HCT116 (cell line): ENCODE measurements at regions of chr10 and their contacts with region 1.

Region 1: DNA sequence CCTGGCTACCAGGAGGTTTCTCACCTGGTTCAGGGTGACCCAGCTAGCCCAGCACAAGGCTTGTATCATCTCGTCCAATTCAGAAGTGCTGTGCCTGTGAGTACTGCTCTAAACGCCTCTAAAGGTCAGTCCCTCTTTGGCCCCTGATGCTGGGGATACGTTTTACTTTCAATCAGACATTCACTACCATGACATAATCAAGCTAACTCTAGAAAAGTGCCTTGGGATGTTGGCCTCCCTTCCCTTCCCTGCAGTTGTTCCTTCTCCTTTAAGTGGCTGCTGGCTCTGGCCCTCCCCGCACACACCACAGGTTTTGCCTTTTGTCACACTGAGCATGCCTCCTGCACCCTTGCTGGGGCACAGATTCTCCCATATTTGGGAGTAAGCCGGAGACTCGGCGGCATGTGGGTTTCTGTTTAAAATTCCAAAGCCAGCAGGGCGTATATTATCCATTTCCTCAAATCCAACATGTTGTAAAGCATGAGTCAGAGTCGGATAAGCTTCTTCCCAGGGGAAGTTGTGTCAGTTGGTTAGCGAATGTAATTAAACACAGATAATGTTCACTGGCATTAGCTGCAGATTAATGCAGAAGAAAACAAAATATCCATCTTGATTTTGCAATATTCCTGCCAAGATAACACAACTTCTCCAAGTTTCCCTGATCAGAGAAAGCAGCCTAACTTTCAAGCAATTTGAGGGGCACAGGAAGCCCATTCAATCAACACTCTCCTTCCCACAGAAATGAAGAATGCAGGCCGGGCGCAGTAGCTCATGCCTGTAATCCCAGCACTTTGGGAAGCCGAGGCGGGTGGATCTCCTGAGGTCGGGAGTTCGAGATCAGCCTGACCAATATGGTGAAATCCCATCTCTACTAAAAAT is 31.8 kb upstream of the VCL start:
- DNase-seq: peak; percentile 99
- ATAC-seq: peak; percentile 91
- H3K4me3 ChIP-seq: peak overlapping the region; percentile 13 to 31
- H3K27ac ChIP-seq: peak overlapping the region; percentile 100
- H3K4me1 ChIP-seq: peaks cover 44 to 69% of the 10 kb centered on the region in 2 experiments
- H3K27me3 ChIP-seq: no peaks in the 10 kb centered on the region
- CTCF ChIP-seq: no peak
- POLR2A ChIP-seq: no peak
- RAD21 ChIP-seq: 0 out of 2 replicates have a peak, but pooled peaks have one; percentile 36

Region 2: DNA sequence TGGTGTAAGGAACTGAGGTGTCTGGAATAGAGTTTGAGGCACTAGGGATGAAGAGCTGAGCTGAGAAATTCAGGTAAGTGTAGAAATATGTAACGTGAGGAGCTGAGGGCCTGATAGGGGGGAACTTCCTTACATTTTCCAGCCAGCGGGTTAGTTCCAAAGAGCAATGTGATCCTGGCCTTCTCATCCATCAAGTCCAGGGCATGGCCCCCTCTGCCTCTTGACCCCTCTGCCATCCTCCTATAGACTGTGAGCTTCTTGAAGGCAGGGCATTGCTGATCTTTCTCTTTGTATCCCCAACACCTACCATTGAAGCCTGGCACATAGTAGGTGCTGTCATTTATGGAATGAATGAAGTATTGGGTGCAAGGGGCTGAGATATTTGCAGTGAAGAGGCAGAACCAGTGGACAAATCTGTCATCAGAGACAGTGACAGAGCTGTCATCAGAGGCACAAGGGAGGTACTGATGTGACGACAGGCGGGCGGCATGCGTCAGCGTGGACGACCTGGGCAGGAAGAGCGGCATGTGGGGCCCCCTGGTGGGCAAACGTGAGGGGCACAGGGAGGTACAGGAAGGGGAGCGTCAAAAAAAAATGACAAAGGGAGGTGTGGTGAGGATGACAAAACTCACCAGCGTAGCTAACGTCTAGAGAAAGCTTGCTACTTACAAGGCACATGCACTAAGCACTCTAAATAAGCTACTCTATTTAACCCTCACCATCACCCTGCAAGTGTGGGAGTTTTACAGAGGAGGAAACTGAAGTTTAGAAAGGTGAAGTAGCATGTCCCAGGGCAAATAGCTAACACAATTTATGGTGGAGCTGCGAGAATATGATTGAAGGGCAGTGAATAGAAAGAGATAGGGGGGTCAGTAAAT is 86.6 kb before region 1 on chr10:
- CTCF ChIA-PET with region 1: no interaction called
- POLR2A ChIA-PET with region 1: no interaction called
- RAD21 ChIA-PET with region 1: no interaction called
- intact Hi-C with region 1: no loop called
- DNase-seq: peak; percentile 81
- ATAC-seq: peak; percentile 90
- H3K4me3 ChIP-seq: no peak overlapping the region
- H3K27ac ChIP-seq: no peak overlapping the region
- H3K4me1 ChIP-seq: peaks cover 29 to 53% of the 10 kb centered on the region in 2 experiments
- H3K27me3 ChIP-seq: no peaks in the 10 kb centered on the region
- CTCF ChIP-seq: peak in 2 of 3 experiments; percentile 93 to 97; a peak in 4 of 6 replicates
- POLR2A ChIP-seq: no peak
- RAD21 ChIP-seq: no peak

Region 3: GRCh38 chr10:73991884-73992245 is 25.7 kb after region 1 on chr10:
- CTCF ChIA-PET with region 1: no interaction called
- POLR2A ChIA-PET with region 1: interaction called, 11 read pairs
- RAD21 ChIA-PET with region 1: no interaction called
- intact Hi-C with region 1: no loop called
- DNase-seq: no peak
- ATAC-seq: peak; percentile 76
- H3K4me3 ChIP-seq: no peak overlapping the region
- H3K27ac ChIP-seq: no peak overlapping the region
- H3K4me1 ChIP-seq: peaks cover 0 to 30% of the 10 kb centered on the region in 2 experiments; a peak in 3 of 4 replicates
- H3K27me3 ChIP-seq: no peaks in the 10 kb centered on the region
- CTCF ChIP-seq: no peak
- POLR2A ChIP-seq: no peak
- RAD21 ChIP-seq: no peak

Region 4: DNA sequence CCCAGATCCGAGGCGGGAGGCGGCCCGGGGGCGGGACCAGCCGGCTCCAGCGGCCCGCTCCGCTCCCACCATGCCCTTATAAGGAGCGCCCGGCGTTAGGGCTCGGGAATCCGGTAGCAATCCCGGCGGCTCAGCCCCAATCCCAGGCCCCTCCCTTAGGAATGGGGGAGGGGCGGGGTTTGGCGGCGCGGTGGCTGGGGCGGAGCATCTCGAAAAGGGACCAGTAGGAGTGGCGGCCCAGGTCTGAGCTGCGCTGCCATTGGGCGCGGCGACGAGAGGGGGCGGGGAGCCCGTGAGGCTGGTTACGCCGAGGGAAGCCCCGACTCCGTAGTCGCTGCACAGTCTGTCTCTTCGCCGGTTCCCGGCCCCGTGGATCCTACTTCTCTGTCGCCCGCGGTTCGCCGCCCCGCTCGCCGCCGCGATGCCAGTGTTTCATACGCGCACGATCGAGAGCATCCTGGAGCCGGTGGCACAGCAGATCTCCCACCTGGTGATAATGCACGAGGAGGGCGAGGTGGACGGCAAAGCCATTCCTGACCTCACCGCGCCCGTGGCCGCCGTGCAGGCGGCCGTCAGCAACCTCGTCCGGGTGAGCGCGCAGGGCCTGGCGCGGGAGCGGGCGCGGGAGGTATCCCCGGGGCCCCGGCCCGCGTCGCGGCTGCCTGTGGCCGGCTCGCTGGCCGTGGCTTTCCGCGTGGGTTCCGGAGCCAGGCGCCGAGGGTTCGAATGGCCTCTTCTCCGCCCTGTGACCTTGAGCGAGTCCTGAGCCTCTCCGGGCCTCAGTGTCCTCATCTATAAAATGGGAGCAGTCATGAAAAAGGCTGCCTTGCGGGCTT is 31.9 kb after region 1 on chr10 and contains the start of gene VCL:
- CTCF ChIA-PET with region 1: no interaction called
- POLR2A ChIA-PET with region 1: interaction called, 11 read pairs
- RAD21 ChIA-PET with region 1: interaction called in 1 of 2 experiments, 4 read pairs
- intact Hi-C with region 1: loop called (anchors 1 kb)
- DNase-seq: peak; percentile 95
- ATAC-seq: peak; percentile 89
- H3K4me3 ChIP-seq: peak within 1 kb of the TSS; percentile 95 to 98
- H3K27ac ChIP-seq: peak within 1 kb of the TSS; percentile 60
- H3K4me1 ChIP-seq: peaks cover 8 to 48% of the 10 kb centered on the region in 2 experiments
- H3K27me3 ChIP-seq: no peaks in the 10 kb centered on the region
- CTCF ChIP-seq: no peak
- POLR2A ChIP-seq: peak; percentile 90
- RAD21 ChIP-seq: no peak
- total RNA-seq, gene VCL: 106 TPM

Region 5: GRCh38 chr10:74332398-74332797 is 366.3 kb after region 1 on chr10:
- CTCF ChIA-PET with region 1: no interaction called
- POLR2A ChIA-PET with region 1: no interaction called
- RAD21 ChIA-PET with region 1: no interaction called
- intact Hi-C with region 1: no loop called
- DNase-seq: no peak
- ATAC-seq: no peak
- H3K4me3 ChIP-seq: no peak overlapping the region
- H3K27ac ChIP-seq: no peak overlapping the region
- H3K4me1 ChIP-seq: peaks cover 2 to 9% of the 10 kb centered on the region in 2 experiments; a peak in 2 of 4 replicates
- H3K27me3 ChIP-seq: no peaks in the 10 kb centered on the region
- CTCF ChIP-seq: no peak
- POLR2A ChIP-seq: no peak
- RAD21 ChIP-seq: no peak